Mammary epithelial cell (primary cell): ENCODE measurements at regions of chrX and their contacts with region 1.

Region 1: DNA sequence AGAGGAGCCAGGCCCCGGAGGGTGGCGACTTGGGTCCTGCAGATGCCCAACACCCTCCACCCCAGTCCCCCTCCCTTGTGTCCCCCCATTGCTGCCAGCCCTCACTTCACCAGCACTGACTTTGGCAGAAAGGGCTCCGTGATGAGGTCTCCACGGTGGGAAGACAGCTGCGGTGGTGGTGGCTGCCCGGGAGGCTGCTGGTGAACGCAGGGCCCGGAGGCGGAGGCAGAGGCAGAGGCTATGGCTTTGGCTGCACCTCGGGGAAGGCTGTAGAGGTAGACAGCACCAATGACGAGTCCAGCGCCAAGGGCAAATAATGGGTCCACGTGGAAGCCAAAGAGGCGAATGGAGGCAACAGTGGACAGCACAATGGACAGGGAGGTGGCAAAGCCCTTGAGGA is 6.8 kb downstream of the SLC35A2 start:
- DNase-seq: no peak
- H3K4me3 ChIP-seq: no peak overlapping the region
- H3K27ac ChIP-seq: no peak overlapping the region
- H3K4me1 ChIP-seq: no peaks in the 10 kb centered on the region
- H3K27me3 ChIP-seq: no peaks in the 10 kb centered on the region
- CTCF ChIP-seq: no peak

Region 2: GRCh38 chrX:48737213-48737938 is 167.2 kb before region 1 on chrX:
- CTCF ChIA-PET with region 1: no interaction called
- dilution Hi-C with region 1: loop called (anchors 10 kb)
- in situ Hi-C with region 1: no loop called
- intact Hi-C with region 1: no loop called
- DNase-seq: peak; percentile 91
- H3K4me3 ChIP-seq: peak overlapping the region; percentile 53 to 61 (median 60)
- H3K27ac ChIP-seq: peak overlapping the region; percentile 63
- H3K4me1 ChIP-seq: peaks cover 7% of the 10 kb centered on the region
- H3K27me3 ChIP-seq: no peaks in the 10 kb centered on the region
- CTCF ChIP-seq: no peak

Region 3: GRCh38 chrX:48835524-48836329 is 68.9 kb before region 1 on chrX and contains the start of gene PCSK1N:
- CTCF ChIA-PET with region 1: no interaction called
- dilution Hi-C with region 1: loop called (anchors 5 kb)
- in situ Hi-C with region 1: no loop called
- intact Hi-C with region 1: no loop called
- DNase-seq: peak; percentile 28
- H3K4me3 ChIP-seq: peak within 1 kb of the TSS; percentile 2 to 55 (median 47)
- H3K27ac ChIP-seq: no peak within 1 kb of the TSS
- H3K4me1 ChIP-seq: peaks cover 7% of the 10 kb centered on the region
- H3K27me3 ChIP-seq: no peaks in the 10 kb centered on the region
- CTCF ChIP-seq: no peak
- total RNA-seq, gene PCSK1N: 16.5 to 36.4 TPM

Region 4: DNA sequence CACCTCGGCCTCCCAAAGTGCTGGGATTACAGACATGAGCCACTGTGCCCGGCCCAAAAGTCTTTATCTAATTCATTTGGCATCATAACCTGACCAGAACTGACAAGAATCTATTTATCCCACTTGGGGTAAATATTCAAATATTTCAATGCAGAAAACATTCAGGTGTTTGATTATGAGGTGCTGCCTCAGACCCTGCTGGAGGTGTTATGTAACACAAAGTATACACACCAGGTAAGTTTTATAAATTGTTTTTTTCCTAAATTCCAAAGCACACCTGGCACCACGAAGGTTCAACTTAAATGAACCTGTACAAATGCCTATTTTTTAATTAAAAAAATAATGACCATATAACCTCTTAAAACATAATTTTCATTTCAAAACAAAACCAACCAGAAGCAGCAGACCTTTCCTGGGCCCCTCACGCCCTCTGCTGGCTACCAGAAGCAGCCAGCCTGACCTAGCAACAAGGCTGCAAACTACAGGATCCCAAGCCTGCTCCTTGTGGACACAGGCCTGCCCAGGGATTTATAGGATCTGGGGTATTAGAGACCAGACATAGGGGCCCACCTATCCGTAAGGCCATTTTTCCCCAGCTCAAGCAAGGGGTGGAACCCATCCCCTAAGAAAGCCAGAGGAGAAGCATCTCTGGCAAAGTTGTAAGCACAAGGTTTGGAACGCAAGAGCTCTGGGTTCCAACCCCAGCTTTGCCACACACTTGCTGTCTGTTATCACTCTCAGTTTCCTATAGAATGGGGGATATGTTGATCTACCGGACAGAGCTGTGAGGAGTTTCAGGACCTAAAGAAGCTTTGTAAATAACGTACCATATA is 41.1 kb after region 1 on chrX:
- CTCF ChIA-PET with region 1: no interaction called
- dilution Hi-C with region 1: loop called (anchors 5 kb)
- in situ Hi-C with region 1: no loop called
- intact Hi-C with region 1: no loop called
- DNase-seq: peak; percentile 27
- H3K4me3 ChIP-seq: no peak overlapping the region
- H3K27ac ChIP-seq: no peak overlapping the region
- H3K4me1 ChIP-seq: no peaks in the 10 kb centered on the region
- H3K27me3 ChIP-seq: no peaks in the 10 kb centered on the region
- CTCF ChIP-seq: peak; percentile 69 to 76